Ovary (tissue), 10 donors: ENCODE measurements at regions of chr16 and their contacts with region 1.

Region 1: GRCh38 chr16:84633622-84634021 is 14.7 kb upstream of the KLHL36 start:
- DNase-seq: peak; percentile 92 to 97 (median 96)
- H3K4me3 ChIP-seq: no peak overlapping the region
- H3K27ac ChIP-seq: peak overlapping the region in 1 of 2 donors; percentile 64
- H3K4me1 ChIP-seq: peaks cover 12% of the 10 kb centered on the region
- H3K27me3 ChIP-seq: no peaks in the 10 kb centered on the region
- CTCF ChIP-seq: no peak
- EP300 ChIP-seq: no peak
- POLR2A ChIP-seq: no peak

Region 2: DNA sequence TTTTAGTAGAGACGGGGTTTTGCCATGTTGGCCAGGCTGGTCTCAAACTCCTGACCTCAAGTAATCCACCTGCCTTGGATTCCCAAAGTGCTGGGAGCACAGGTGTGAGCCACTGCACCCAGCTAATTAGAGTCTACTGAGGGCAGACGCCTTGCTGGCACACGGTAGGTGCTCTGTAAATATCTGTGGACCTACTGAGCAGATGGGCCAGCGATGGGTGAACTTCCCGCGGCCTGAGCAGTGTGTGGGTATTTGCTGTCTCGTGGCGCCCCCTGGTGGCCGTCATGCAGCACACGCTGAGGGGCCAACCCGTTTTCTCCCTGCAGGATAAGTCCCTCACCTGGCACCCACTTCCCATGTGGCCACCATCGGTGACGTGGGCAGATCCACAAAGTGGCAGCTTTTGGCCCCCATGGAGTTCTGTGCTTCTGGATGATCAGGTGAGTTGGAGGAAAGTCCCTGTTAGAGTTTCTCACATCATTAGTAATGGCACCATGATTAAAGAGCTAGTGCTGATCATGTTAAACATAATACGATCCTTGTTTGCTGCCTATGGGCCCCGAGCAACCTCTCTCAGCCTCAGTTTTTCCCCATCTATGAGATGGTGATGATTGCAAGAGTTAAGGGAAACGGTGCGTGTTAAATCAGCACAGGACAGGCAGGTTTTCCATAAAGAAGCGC is 337.0 kb after region 1 on chr16:
- intact Hi-C with region 1: loop called in 2 of 4 experiments (anchors 10 kb)
- DNase-seq: peak; percentile 75 to 88 (median 85)
- H3K4me3 ChIP-seq: no peak overlapping the region
- H3K27ac ChIP-seq: no peak overlapping the region
- H3K4me1 ChIP-seq: no peaks in the 10 kb centered on the region
- H3K27me3 ChIP-seq: no peaks in the 10 kb centered on the region
- CTCF ChIP-seq: peak; percentile 73 to 96 (median 96)
- EP300 ChIP-seq: no peak
- POLR2A ChIP-seq: no peak